ENCODE measurements at regions of chr2 and their contacts with region 1.

Region 1: DNA sequence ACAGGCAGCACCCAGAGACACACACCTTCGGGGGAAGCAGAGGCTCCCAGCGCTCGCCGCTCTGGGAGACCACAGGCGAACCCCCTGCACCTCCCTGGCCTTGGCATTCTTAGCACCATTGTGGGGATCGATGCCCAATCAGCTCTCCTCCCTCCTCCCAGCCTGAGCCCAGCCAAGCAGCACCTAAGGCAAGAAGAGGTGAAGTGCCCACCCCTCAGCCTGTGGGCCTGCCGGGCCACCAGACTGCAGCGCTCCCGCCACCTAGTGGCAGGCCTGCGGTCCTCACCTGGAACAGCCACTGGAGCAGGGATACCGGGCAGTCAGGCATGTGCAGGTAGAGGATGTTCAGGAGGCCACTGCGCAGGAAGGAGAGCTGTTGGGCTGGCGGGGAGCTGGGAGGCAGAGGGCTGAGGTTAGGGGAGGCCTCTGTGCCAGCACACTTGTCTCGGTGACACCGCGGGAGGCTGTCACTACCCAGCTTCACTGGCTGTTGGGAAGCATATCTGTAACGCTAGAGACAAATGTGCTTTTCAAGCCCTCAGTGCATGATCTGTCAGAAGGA is 35.2 kb downstream of the FAM178B start:
- DNase-seq: peak; percentile 87
- ATAC-seq: peak; percentile 95
- H3K4me3 Mint-ChIP-seq: no peak overlapping the region
- H3K27ac Mint-ChIP-seq: no peak overlapping the region
- H3K4me1 Mint-ChIP-seq: peaks cover 23% of the 10 kb centered on the region
- H3K27me3 Mint-ChIP-seq: no peaks in the 10 kb centered on the region

Region 2: DNA sequence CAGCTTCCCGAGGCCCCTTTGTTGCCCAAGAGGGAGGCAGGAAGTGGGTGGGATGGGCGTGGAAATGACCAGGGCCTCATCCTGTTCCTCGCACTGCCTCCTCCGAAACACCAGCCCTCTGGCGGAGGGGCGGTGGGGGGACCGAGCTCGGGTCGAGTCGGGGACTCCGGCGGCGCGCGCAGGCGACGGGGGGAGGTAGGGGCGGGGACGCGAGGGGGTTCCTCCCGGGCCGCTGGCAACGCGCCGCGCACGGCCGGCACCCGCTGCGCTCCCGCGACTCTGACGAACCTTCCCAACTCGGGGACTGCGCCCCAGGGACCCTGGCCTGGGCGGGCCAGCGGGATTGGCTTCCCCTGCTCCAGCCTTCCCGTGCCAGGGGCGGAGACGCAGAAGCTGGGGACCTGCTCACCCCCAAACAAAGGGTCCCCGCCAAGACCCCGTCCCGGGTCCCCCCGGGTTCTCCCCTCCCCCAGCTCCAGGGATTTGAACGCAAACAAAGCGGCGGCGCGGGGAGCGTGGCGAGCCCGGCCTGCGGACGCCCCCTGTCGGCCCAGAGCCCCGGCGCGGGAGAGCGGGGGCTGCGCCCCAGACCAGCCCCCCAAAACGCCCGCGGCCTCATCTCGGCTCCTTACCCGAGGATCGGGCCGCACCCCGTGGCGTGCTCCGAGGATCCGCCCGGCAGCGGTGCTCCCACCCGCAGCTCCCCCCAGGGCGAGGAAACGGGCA is 82.5 kb before region 1 on chr2:
- CTCF ChIA-PET with region 1: interaction called, 6 read pairs
- POLR2A ChIA-PET with region 1: interaction called, 4 read pairs
- intact Hi-C with region 1: loop called in 1 of 2 experiments (anchors 5 kb)
- DNase-seq: peak; percentile 77
- ATAC-seq: peak; percentile 52
- H3K4me3 Mint-ChIP-seq: peak overlapping the region; percentile 78
- H3K27ac Mint-ChIP-seq: peak overlapping the region; percentile 83
- H3K4me1 Mint-ChIP-seq: peaks cover 41% of the 10 kb centered on the region
- H3K27me3 Mint-ChIP-seq: peaks cover 6% of the 10 kb centered on the region

Region 3: GRCh38 chr2:96940001-96940615 is 11.1 kb before region 1 on chr2:
- CTCF ChIA-PET with region 1: interaction called, 24 read pairs
- POLR2A ChIA-PET with region 1: no interaction called
- intact Hi-C with region 1: no loop called
- DNase-seq: no peak
- ATAC-seq: no peak
- H3K4me3 Mint-ChIP-seq: no peak overlapping the region
- H3K27ac Mint-ChIP-seq: no peak overlapping the region
- H3K4me1 Mint-ChIP-seq: peaks cover 23% of the 10 kb centered on the region
- H3K27me3 Mint-ChIP-seq: no peaks in the 10 kb centered on the region